ENCODE measurements at regions of chr14 and their contacts with region 1.

Region 1: GRCh38 chr14:90518941-90519256 is 122.1 kb downstream of the CALM1 start:
- DNase-seq: peak; percentile 27
- H3K4me3 Mint-ChIP-seq: no peak overlapping the region
- H3K27ac Mint-ChIP-seq: no peak overlapping the region
- H3K4me1 Mint-ChIP-seq: no peaks in the 10 kb centered on the region
- H3K27me3 Mint-ChIP-seq: no peaks in the 10 kb centered on the region

Region 2: GRCh38 chr14:90301668-90302090 is 217.2 kb before region 1 on chr14:
- intact Hi-C with region 1: loop called (anchors 1 kb)
- DNase-seq: no peak
- H3K4me3 Mint-ChIP-seq: no peak overlapping the region
- H3K27ac Mint-ChIP-seq: no peak overlapping the region
- H3K4me1 Mint-ChIP-seq: peaks cover 18% of the 10 kb centered on the region
- H3K27me3 Mint-ChIP-seq: no peaks in the 10 kb centered on the region

Region 3: GRCh38 chr14:90368946-90369721 is 149.8 kb before region 1 on chr14:
- intact Hi-C with region 1: loop called (anchors 1 kb)
- DNase-seq: no peak
- H3K4me3 Mint-ChIP-seq: no peak overlapping the region
- H3K27ac Mint-ChIP-seq: no peak overlapping the region
- H3K4me1 Mint-ChIP-seq: no peaks in the 10 kb centered on the region
- H3K27me3 Mint-ChIP-seq: peaks cover 6% of the 10 kb centered on the region

Measured in activated T-helper 1 cell treated with anti-CD3 and anti-CD28 coated beads, Interleukin-12 subunit alpha, Interleukin-12 subunit beta, Interleukin-2, Interleukin-4 antibody, amounts not matched to agents 30 ng/mL and 10 ng/mL and 1 ng/mL, durations not matched to agents 14 hours and 24 hours and 36 hours (primary cell).